AG04450 (cell line): ENCODE measurements at regions of chr5 and their contacts with region 1.

Region 1: GRCh38 chr5:54310433-54311175 is at the start of gene ARL15:
- DNase-seq: peak; percentile 93
- H3K4me3 ChIP-seq: peak within 1 kb of the TSS; percentile 88
- H3K27ac ChIP-seq: peak within 1 kb of the TSS; percentile 81
- H3K27me3 ChIP-seq: peaks cover 3% of the 10 kb centered on the region
- CTCF ChIP-seq: no peak
- polyA plus RNA-seq, gene ARL15: 16.0 and 17.1 TPM in 2 replicates

Region 2: GRCh38 chr5:54295651-54296276 is 14.8 kb before region 1 on chr5:
- CTCF ChIA-PET with region 1: no interaction called
- POLR2A ChIA-PET with region 1: interaction called, 16 read pairs
- DNase-seq: no peak
- H3K4me3 ChIP-seq: no peak overlapping the region
- H3K27ac ChIP-seq: no peak overlapping the region
- H3K27me3 ChIP-seq: no peaks in the 10 kb centered on the region
- CTCF ChIP-seq: no peak

Region 3: GRCh38 chr5:54329731-54330709 is 19.4 kb after region 1 on chr5:
- CTCF ChIA-PET with region 1: interaction called, 5 read pairs
- POLR2A ChIA-PET with region 1: interaction called, 22 read pairs
- DNase-seq: peak; percentile 77
- H3K4me3 ChIP-seq: no peak overlapping the region
- H3K27ac ChIP-seq: peak overlapping the region; percentile 78
- H3K27me3 ChIP-seq: no peaks in the 10 kb centered on the region
- CTCF ChIP-seq: no peak

Region 4: DNA sequence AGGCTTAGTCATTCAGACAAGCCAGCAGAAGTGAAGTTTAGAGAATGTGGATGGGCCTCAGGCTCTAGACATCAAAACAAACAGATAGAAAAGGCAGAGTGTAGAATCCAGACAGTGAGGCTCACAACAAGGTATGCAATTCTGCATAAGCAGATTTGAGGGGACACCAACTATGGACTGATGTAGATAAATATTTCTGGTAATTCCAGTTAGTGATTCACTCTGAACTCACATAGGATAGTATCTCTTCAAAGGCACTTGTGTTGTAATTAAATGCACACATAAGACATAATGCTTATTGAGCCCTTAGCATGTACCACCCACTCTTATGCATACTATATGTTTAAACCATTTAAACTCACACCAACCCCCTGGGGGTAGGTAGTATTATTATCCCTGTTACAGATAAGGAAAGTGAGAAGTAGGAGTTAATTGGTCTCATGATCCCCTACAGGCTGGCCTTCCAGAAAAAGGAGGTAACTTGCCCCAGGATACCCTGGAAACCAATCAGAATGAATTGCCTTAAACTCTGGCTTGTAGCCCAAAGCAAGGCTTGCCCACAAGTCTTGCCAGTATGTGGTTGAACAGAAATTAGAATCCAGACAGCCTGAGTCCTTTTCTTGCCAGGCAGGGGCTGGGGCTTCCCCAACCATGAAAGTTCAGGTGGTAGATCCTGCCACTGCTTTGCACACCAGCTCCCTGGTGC is 105.4 kb after region 1 on chr5:
- CTCF ChIA-PET with region 1: interaction called, 17 read pairs
- POLR2A ChIA-PET with region 1: interaction called, 10 read pairs
- DNase-seq: no peak
- H3K4me3 ChIP-seq: no peak overlapping the region
- H3K27ac ChIP-seq: no peak overlapping the region
- H3K27me3 ChIP-seq: peaks cover 15% of the 10 kb centered on the region
- CTCF ChIP-seq: no peak

Region 5: DNA sequence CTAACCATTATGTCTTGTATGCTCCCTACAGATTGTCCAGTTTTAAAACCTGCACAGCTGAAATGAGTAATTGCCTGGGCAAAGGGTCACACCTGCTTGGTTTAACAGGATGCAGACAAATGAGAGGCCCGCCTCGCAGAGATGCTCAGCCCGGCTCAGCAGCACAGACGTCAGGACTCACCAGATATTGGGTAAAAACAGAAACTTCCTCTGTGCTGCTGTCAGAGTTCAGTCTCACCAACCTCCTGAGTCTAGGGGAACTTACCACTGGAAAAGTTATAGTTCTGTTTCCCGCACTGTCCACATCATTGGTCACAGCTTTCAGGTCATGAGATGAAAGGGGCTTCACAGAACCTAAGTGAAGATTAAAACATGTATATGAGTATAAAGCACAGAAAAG is 522.3 kb after region 1 on chr5:
- CTCF ChIA-PET with region 1: no interaction called
- POLR2A ChIA-PET with region 1: no interaction called
- DNase-seq: no peak
- H3K4me3 ChIP-seq: no peak overlapping the region
- H3K27ac ChIP-seq: no peak overlapping the region
- H3K27me3 ChIP-seq: no peaks in the 10 kb centered on the region
- CTCF ChIP-seq: no peak

Region 6: DNA sequence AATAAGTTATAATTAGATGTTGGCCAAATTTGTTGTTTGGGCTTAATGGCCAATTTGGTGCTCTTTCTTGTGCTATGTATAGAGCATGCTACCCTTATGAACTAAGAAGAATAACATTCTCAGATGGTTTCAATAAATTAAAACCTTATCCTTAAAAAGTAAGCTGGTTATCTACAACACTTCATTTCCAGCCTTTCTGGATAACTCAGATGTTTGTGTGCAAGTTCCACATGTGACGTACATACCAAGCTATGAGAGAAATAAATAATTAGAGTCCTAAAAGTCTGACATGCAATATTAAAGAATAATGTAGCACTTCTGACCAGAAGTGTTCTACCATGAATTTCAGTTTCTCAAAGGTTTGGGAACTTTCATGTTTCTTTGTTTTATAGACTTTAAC is 1008.9 kb after region 1 on chr5:
- CTCF ChIA-PET with region 1: no interaction called
- POLR2A ChIA-PET with region 1: no interaction called
- DNase-seq: no peak
- H3K4me3 ChIP-seq: no peak overlapping the region
- H3K27ac ChIP-seq: no peak overlapping the region
- H3K27me3 ChIP-seq: no peaks in the 10 kb centered on the region
- CTCF ChIP-seq: no peak